ENCODE measurements at regions of chr5 and their contacts with region 1.

Region 1: GRCh38 chr5:94218374-94218773 is 400.0 kb downstream of the KIAA0825 start:
- DNase-seq: peak; percentile 86
- ATAC-seq: peak; percentile 89
- H3K4me3 ChIP-seq: no peak overlapping the region
- H3K27ac ChIP-seq: no peak overlapping the region
- H3K4me1 ChIP-seq: peaks cover 4% of the 10 kb centered on the region; the same call in 1 of the 2 replicates
- H3K27me3 ChIP-seq: no peaks in the 10 kb centered on the region
- CTCF ChIP-seq: no peak
- POLR2A ChIP-seq: no peak
- RAD21 ChIP-seq: no peak

Region 2: DNA sequence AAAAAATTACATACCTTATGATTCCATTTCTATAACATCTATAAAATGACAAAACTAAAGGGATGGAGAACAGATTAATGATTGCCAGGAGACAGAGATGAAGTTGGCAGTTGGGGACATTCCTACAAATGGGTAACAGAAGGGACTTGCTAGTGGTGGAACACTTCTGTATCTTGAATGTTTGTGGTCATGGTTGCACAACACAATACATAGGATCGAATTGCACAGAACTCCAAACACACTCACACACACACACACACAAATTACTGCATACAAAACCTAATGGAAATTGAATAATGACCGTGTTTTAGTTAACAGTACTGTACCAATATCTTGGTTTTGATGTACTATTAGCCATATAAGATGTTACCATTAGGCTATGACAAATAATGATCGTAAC is 146.3 kb before region 1 on chr5:
- CTCF ChIA-PET with region 1: no interaction called
- POLR2A ChIA-PET with region 1: no interaction called
- dilution Hi-C with region 1: no loop called
- in situ Hi-C with region 1: no loop called
- intact Hi-C with region 1: no loop called
- DNase-seq: peak; percentile 22
- ATAC-seq: no peak
- H3K4me3 ChIP-seq: no peak overlapping the region
- H3K27ac ChIP-seq: no peak overlapping the region
- H3K4me1 ChIP-seq: no peaks in the 10 kb centered on the region
- H3K27me3 ChIP-seq: no peaks in the 10 kb centered on the region
- CTCF ChIP-seq: no peak
- POLR2A ChIP-seq: no peak
- RAD21 ChIP-seq: no peak

Region 3: GRCh38 chr5:94240993-94241651 is 22.7 kb after region 1 on chr5:
- CTCF ChIA-PET with region 1: no interaction called
- POLR2A ChIA-PET with region 1: no interaction called
- dilution Hi-C with region 1: no loop called
- in situ Hi-C with region 1: no loop called
- intact Hi-C with region 1: loop called (anchors 2 kb)
- DNase-seq: peak; percentile 38
- ATAC-seq: peak; percentile 32
- H3K4me3 ChIP-seq: no peak overlapping the region
- H3K27ac ChIP-seq: no peak overlapping the region
- H3K4me1 ChIP-seq: peaks cover 12% of the 10 kb centered on the region
- H3K27me3 ChIP-seq: no peaks in the 10 kb centered on the region
- CTCF ChIP-seq: no peak
- POLR2A ChIP-seq: no peak
- RAD21 ChIP-seq: no peak

Region 4: GRCh38 chr5:94397508-94397907 is 179.1 kb after region 1 on chr5:
- CTCF ChIA-PET with region 1: no interaction called
- POLR2A ChIA-PET with region 1: no interaction called
- dilution Hi-C with region 1: no loop called
- in situ Hi-C with region 1: no loop called
- intact Hi-C with region 1: no loop called
- DNase-seq: no peak
- ATAC-seq: no peak
- H3K4me3 ChIP-seq: no peak overlapping the region
- H3K27ac ChIP-seq: no peak overlapping the region
- H3K4me1 ChIP-seq: no peaks in the 10 kb centered on the region
- H3K27me3 ChIP-seq: no peaks in the 10 kb centered on the region
- CTCF ChIP-seq: no peak
- POLR2A ChIP-seq: no peak
- RAD21 ChIP-seq: no peak